Testis (tissue), 5 donors: ENCODE measurements at regions of chr14 and their contacts with region 1.

Region 1: GRCh38 chr14:35404449-35405303 is at the start of gene NFKBIA:
- DNase-seq: peak; percentile 87
- H3K4me3 ChIP-seq: peak within 1 kb of the TSS; percentile 92 to 96
- H3K27ac ChIP-seq: peak within 1 kb of the TSS; percentile 96 to 99
- H3K4me1 ChIP-seq: peaks cover 28% of the 10 kb centered on the region
- H3K27me3 ChIP-seq: no peaks in the 10 kb centered on the region
- CTCF ChIP-seq: peak in 1 of 3 experiments; percentile 10
- POLR2A ChIP-seq: peak; percentile 38
- total RNA-seq, gene NFKBIA: 154 to 171 TPM

Region 2: GRCh38 chr14:35215110-35215876 is 189.4 kb before region 1 on chr14:
- intact Hi-C with region 1: loop called (anchors 10 kb)
- DNase-seq: no peak
- H3K4me3 ChIP-seq: no peak overlapping the region
- H3K27ac ChIP-seq: no peak overlapping the region
- H3K4me1 ChIP-seq: peaks cover 10% of the 10 kb centered on the region
- H3K27me3 ChIP-seq: no peaks in the 10 kb centered on the region
- CTCF ChIP-seq: peak in 1 of 3 experiments; percentile 34
- POLR2A ChIP-seq: no peak

Region 3: GRCh38 chr14:35229495-35230089 is 175.1 kb before region 1 on chr14:
- intact Hi-C with region 1: no loop called
- DNase-seq: no peak
- H3K4me3 ChIP-seq: no peak overlapping the region
- H3K27ac ChIP-seq: no peak overlapping the region
- H3K4me1 ChIP-seq: no peaks in the 10 kb centered on the region
- H3K27me3 ChIP-seq: no peaks in the 10 kb centered on the region
- CTCF ChIP-seq: peak in 1 of 3 experiments; percentile 28
- POLR2A ChIP-seq: no peak

Region 4: GRCh38 chr14:35336494-35337268 is 68.0 kb before region 1 on chr14:
- intact Hi-C with region 1: loop called (anchors 1 kb)
- DNase-seq: peak; percentile 95
- H3K4me3 ChIP-seq: no peak overlapping the region
- H3K27ac ChIP-seq: peak overlapping the region; percentile 81 to 91
- H3K4me1 ChIP-seq: peaks cover 81% of the 10 kb centered on the region
- H3K27me3 ChIP-seq: no peaks in the 10 kb centered on the region
- CTCF ChIP-seq: no peak
- POLR2A ChIP-seq: no peak